Activated B cell treated with CpG ODN at 0.5 μM for 24 hours (primary cell): ENCODE measurements at regions of chr7 and their contacts with region 1.

Region 1: DNA sequence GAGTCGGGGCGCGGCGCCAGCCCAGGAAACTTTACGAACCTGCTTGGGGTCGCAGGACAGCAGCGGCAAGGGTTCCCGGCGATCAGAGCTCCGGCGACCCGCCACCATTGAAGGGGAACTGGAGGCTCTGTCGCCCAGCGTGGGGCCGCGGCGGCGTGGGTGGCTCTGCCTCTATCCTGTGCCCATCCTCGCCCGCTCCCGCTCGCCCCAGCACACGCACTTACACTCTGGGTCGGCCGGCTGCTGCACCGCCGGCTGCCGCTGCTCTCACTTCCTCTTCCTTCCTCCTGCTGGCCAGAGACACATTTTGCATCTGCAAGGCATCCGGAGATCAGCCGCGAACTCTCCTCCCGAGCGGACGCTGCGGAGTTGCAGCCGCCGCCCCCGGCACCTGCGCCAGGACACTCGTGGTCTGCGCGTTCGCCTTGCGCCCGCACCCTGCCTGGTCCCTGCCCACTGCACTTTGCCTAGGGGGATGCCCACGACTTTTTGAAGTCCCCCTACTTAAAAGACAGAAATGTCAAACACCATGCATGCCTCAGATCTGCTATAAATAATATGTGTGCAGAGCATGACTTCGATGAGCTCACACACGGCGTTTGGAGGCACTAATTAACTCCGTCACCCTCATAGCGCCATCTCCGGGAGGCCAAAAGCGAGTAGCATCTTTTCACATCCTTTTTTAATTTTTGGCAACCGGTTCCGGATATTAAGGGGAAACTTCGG is at the start of gene ELMO1:
- DNase-seq: peak; percentile 81
- ATAC-seq: peak; percentile 81
- H3K4me3 Mint-ChIP-seq: peak within 1 kb of the TSS; percentile 92
- H3K27ac Mint-ChIP-seq: peak within 1 kb of the TSS; percentile 99
- H3K4me1 Mint-ChIP-seq: peaks cover 47% of the 10 kb centered on the region
- H3K27me3 Mint-ChIP-seq: no peaks in the 10 kb centered on the region
- CTCF ChIP-seq: no peak
- total RNA-seq, gene ELMO1: 108 and 132 TPM in 2 replicates

Region 2: DNA sequence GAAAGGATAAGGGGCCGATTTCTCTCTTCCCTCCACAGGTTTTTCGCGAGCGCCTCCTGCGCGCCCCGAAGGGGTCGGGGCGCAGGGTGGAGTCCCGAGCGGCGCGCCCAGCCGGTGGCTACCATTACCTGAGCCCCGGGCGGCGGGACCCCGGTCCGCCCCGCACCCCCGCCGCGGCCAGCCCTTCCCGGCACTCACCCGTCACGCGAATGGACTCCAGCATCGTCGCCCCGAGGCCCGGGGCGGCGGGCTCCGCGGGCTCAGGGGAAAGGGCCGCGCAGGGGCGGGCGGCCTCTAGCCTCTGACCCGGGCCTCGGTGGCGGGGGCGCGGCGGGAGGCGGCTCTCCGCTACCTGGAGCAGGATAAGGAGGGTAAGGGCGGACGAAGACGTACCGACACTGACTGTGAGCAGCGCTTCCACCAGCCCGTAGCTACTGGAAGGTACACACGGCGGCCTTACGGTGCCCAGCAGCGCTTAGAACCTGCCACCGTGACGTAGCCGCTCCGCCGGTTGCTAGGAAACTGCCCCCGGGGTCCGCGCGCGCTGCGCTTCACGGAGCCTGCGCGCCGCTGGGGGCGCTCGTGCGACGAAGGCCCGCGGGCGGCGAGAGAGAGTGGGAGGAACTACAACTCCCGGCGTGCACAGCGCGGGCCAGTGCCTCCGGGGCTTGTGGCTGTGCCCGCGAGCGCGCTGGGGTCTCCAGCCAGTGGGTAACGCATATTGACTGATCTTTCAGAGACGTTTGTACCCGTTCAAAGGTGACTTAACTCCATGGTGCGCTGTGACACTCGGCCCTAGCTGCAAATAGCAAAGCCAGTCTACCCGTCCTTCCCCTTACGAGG is 1081.9 kb before region 1 on chr7:
- CTCF ChIA-PET with region 1: no interaction called
- POLR2A ChIA-PET with region 1: no interaction called
- intact Hi-C with region 1: loop called (anchors 2 kb)
- DNase-seq: peak; percentile 93
- ATAC-seq: peak; percentile 98
- H3K4me3 Mint-ChIP-seq: peak overlapping the region; percentile 92
- H3K27ac Mint-ChIP-seq: peak overlapping the region; percentile 30
- H3K4me1 Mint-ChIP-seq: peaks cover 5% of the 10 kb centered on the region
- H3K27me3 Mint-ChIP-seq: peaks cover 6% of the 10 kb centered on the region
- CTCF ChIP-seq: no peak

Region 3: GRCh38 chr7:37128327-37129034 is 320.3 kb before region 1 on chr7:
- CTCF ChIA-PET with region 1: no interaction called
- POLR2A ChIA-PET with region 1: no interaction called
- intact Hi-C with region 1: no loop called
- DNase-seq: no peak
- ATAC-seq: no peak
- H3K4me3 Mint-ChIP-seq: no peak overlapping the region
- H3K27ac Mint-ChIP-seq: peak overlapping the region; percentile 10
- H3K4me1 Mint-ChIP-seq: peaks cover 5% of the 10 kb centered on the region
- H3K27me3 Mint-ChIP-seq: no peaks in the 10 kb centered on the region
- CTCF ChIP-seq: no peak

Region 4: GRCh38 chr7:37284805-37285231 is 164.0 kb before region 1 on chr7:
- CTCF ChIA-PET with region 1: interaction called, 4 read pairs
- POLR2A ChIA-PET with region 1: interaction called, 4 read pairs
- intact Hi-C with region 1: loop called (anchors 1 kb)
- DNase-seq: peak; percentile 25
- ATAC-seq: no peak
- H3K4me3 Mint-ChIP-seq: no peak overlapping the region
- H3K27ac Mint-ChIP-seq: no peak overlapping the region
- H3K4me1 Mint-ChIP-seq: peaks cover 50% of the 10 kb centered on the region
- H3K27me3 Mint-ChIP-seq: no peaks in the 10 kb centered on the region
- CTCF ChIP-seq: peak; percentile 33

Region 5: GRCh38 chr7:37391791-37392672 is 56.8 kb before region 1 on chr7:
- CTCF ChIA-PET with region 1: no interaction called
- POLR2A ChIA-PET with region 1: interaction called, 8 read pairs
- intact Hi-C with region 1: loop called (anchors 1 kb)
- DNase-seq: no peak
- ATAC-seq: peak; percentile 83
- H3K4me3 Mint-ChIP-seq: peak overlapping the region; percentile 28
- H3K27ac Mint-ChIP-seq: peak overlapping the region; percentile 46
- H3K4me1 Mint-ChIP-seq: peaks cover 64% of the 10 kb centered on the region
- H3K27me3 Mint-ChIP-seq: no peaks in the 10 kb centered on the region
- CTCF ChIP-seq: no peak

Region 6: GRCh38 chr7:37424995-37425394 is 23.8 kb before region 1 on chr7:
- CTCF ChIA-PET with region 1: no interaction called
- POLR2A ChIA-PET with region 1: interaction called, 12 read pairs
- intact Hi-C with region 1: no loop called
- DNase-seq: no peak
- ATAC-seq: peak; percentile 54
- H3K4me3 Mint-ChIP-seq: no peak overlapping the region
- H3K27ac Mint-ChIP-seq: no peak overlapping the region
- H3K4me1 Mint-ChIP-seq: peaks cover 52% of the 10 kb centered on the region
- H3K27me3 Mint-ChIP-seq: no peaks in the 10 kb centered on the region
- CTCF ChIP-seq: no peak

Region 7: DNA sequence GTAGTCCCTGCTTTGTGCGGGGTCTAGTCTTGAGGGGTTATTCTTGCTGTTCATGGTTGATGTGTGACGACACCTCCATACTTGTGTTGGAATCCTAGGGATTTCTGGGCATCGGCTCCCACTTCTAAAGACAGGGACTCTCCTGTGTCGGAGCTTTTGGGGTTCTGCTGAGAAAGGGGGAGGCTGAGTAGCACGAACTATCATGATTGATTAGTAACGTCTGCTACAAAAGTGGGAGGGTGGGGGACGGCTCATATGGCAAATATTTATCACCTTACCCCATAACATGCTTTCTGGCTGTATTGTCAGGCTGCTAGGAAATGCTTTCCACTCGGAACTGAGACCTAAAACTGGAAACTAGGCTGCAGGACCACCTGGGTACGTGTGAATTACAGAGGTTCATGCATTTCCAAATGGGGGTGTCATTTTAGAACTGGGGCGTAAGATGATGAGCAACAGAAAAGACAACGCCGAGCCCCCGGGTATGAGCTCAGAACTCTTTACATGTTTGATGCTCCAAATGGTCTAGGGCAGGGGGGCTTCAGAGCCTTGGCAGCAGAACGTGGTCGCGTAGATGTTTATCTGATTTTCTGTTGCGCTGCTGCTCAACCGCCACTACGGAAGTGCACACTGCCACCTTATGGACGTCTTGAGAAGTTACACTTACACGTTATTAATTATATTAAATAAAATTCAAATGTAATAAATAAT is 384.5 kb after region 1 on chr7:
- CTCF ChIA-PET with region 1: no interaction called
- POLR2A ChIA-PET with region 1: interaction called, 3 read pairs
- intact Hi-C with region 1: loop called (anchors 2 kb)
- DNase-seq: peak; percentile 23
- ATAC-seq: peak; percentile 71
- H3K4me3 Mint-ChIP-seq: peak overlapping the region; percentile 81
- H3K27ac Mint-ChIP-seq: no peak overlapping the region
- H3K4me1 Mint-ChIP-seq: peaks cover 15% of the 10 kb centered on the region
- H3K27me3 Mint-ChIP-seq: no peaks in the 10 kb centered on the region
- CTCF ChIP-seq: peak; percentile 87